CD8-positive, alpha-beta T cell (primary cell): ENCODE measurements at regions of chr9 and their contacts with region 1.

Region 1: GRCh38 chr9:128829477-128830251 is at the start of gene SPOUT1:
- DNase-seq: peak; percentile 88 to 96 (median 92)
- ATAC-seq: peak; percentile 99
- H3K4me3 ChIP-seq: peak within 1 kb of the TSS; percentile 89 to 99
- H3K4me3 Mint-ChIP-seq: peak within 1 kb of the TSS; percentile 96
- H3K27ac ChIP-seq: peak within 1 kb of the TSS; percentile 73 to 83
- H3K27ac Mint-ChIP-seq: peak within 1 kb of the TSS; percentile 94
- H3K4me1 ChIP-seq: peaks cover 18% of the 10 kb centered on the region
- H3K4me1 Mint-ChIP-seq: peaks cover 20% of the 10 kb centered on the region
- H3K27me3 ChIP-seq: no peaks in the 10 kb centered on the region
- H3K27me3 Mint-ChIP-seq: no peaks in the 10 kb centered on the region
- CTCF ChIP-seq: no peak
- total RNA-seq, gene SPOUT1: 25.0 to 25.2 TPM

Region 2: GRCh38 chr9:128818099-128818838 is 11.4 kb before region 1 on chr9 and contains the start of gene ENDOG:
- CTCF ChIA-PET with region 1: interaction called, 15 read pairs
- POLR2A ChIA-PET with region 1: interaction called, 61 read pairs
- intact Hi-C with region 1: loop called (anchors 1 kb)
- DNase-seq: peak; percentile 94 to 98 (median 97)
- ATAC-seq: peak; percentile 96
- H3K4me3 ChIP-seq: peak within 1 kb of the TSS; percentile 59 to 75
- H3K4me3 Mint-ChIP-seq: peak within 1 kb of the TSS; percentile 91
- H3K27ac ChIP-seq: peak within 1 kb of the TSS; percentile 52 to 67
- H3K27ac Mint-ChIP-seq: peak within 1 kb of the TSS; percentile 87
- H3K4me1 ChIP-seq: peaks cover 12% of the 10 kb centered on the region
- H3K4me1 Mint-ChIP-seq: peaks cover 21% of the 10 kb centered on the region
- H3K27me3 ChIP-seq: no peaks in the 10 kb centered on the region
- H3K27me3 Mint-ChIP-seq: no peaks in the 10 kb centered on the region
- CTCF ChIP-seq: peak; percentile 98
- total RNA-seq, gene ENDOG: 6.2 to 6.4 TPM

Region 3: GRCh38 chr9:129028192-129028957 is 198.7 kb after region 1 on chr9 and contains the start of gene SH3GLB2:
- CTCF ChIA-PET with region 1: no interaction called
- POLR2A ChIA-PET with region 1: no interaction called
- intact Hi-C with region 1: loop called in 1 of 2 experiments (anchors 10 kb)
- DNase-seq: peak; percentile 88 to 97 (median 94)
- ATAC-seq: peak; percentile 92
- H3K4me3 ChIP-seq: peak within 1 kb of the TSS; percentile 51 to 61
- H3K4me3 Mint-ChIP-seq: peak within 1 kb of the TSS; percentile 83
- H3K27ac ChIP-seq: peak within 1 kb of the TSS; percentile 40 to 62
- H3K27ac Mint-ChIP-seq: peak within 1 kb of the TSS; percentile 64
- H3K4me1 ChIP-seq: peaks cover 13% of the 10 kb centered on the region
- H3K4me1 Mint-ChIP-seq: peaks cover 24% of the 10 kb centered on the region
- H3K27me3 ChIP-seq: no peaks in the 10 kb centered on the region
- H3K27me3 Mint-ChIP-seq: no peaks in the 10 kb centered on the region
- CTCF ChIP-seq: no peak
- total RNA-seq, gene SH3GLB2: 64.9 to 68.3 TPM